ENCODE measurements at regions of chr7 and their contacts with region 1.

Region 1: DNA sequence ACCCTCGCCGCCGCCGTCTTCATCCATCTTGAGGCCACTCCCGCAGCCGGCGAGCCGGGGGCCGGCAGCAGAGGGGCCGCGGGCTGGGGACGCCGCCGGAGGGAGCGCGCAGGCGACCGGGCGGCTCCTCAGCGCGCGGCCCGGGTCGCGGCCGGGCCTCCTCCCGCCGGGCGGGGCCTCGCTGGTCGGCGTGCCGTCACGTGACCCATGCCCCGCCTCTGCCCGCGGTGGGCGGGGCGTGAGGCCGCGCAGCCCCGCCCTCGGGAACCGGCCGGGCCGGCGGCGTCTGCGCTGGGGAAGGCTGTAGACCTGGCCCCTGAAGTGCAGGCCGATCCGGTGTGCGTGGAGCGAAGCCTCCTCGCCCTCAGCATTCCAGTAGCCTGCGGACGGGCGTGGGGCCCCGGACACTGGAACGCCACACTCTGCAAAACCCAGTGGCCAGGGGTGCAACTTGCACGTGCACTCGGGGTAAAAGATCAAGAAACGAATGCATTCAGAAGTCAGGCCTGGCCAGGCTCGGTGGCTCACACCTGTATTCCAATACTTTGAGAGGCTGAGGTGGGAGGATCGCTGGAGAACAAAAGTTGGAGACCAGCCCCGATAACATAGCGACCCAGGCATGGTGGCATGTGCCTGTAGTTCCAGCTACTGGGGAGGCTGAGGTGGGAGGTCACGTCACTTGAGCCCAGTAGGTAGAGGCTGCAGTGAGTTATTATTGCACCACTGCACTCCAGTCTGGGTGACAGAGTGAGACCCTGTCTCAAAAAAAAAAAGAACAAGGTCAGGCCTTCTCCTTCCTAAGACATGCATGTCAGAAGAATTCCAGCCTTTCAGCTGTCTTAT is at the start of gene CYTH3:
- DNase-seq: peak; percentile 71
- H3K4me3 Mint-ChIP-seq: peak within 1 kb of the TSS; percentile 81
- H3K27ac Mint-ChIP-seq: no peak within 1 kb of the TSS
- H3K4me1 Mint-ChIP-seq: peaks cover 13% of the 10 kb centered on the region
- H3K27me3 Mint-ChIP-seq: peaks cover 21% of the 10 kb centered on the region
- total RNA-seq, gene CYTH3: 1.1 TPM

Region 2: DNA sequence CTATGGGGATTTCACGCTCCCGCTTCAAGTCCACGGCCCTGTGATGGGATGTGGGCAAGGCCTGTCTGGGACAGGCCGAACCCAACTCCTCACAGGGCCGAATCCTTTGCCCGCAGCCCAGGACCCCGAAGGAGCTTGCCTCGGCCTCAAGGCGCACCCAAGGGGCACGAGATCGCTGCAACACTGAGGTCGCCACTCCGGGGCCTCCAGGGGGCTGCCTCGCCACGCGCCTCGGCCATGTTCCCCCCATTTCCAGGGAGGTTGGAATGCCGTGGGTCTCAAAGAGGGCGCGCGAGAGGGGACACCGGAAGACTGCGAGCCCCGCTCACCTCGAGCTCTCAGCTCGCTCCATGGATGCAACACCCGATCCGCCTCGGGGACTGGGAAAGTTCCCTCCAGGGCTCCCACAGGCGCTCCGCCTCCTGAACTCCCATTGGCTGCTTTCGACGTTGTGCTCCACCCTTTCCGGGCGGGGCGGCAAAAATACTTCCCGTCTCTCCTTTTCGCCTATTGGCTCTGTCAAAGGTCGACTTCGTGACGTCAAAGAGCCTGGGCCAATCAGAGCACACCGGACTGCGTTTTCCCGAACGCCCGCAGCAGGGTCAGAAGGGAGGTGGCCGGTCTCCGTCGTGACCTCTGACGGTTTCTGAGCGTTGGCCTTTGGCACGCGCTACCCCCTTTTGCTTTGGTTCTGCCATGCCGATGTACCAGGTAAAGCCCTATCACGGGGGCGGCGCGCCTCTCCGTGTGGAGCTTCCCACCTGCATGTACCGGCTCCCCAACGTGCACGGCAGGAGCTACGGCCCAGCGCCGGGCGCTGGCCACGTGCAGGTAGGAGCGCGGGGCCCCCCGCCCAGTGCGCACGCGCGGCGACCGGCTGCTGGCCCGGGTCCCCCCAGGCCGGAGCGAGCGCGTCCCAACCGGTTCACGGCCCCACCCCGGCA is 263.8 kb before region 1 on chr7 and contains the starts of genes AIMP2 and PMS2:
- CTCF ChIA-PET with region 1: no interaction called
- intact Hi-C with region 1: loop called (anchors 2 kb)
- DNase-seq: peak; percentile 99
- H3K4me3 Mint-ChIP-seq: peak within 1 kb of the TSS; percentile 87
- H3K27ac Mint-ChIP-seq: peak within 1 kb of the TSS; percentile 89
- H3K4me1 Mint-ChIP-seq: peaks cover 45% of the 10 kb centered on the region
- H3K27me3 Mint-ChIP-seq: no peaks in the 10 kb centered on the region
- total RNA-seq, gene AIMP2: 30.8 to 32.2 TPM
- total RNA-seq, gene PMS2: 19.4 to 19.8 TPM

Region 3: GRCh38 chr7:6106140-6106904 is 166.4 kb before region 1 on chr7:
- CTCF ChIA-PET with region 1: no interaction called
- intact Hi-C with region 1: loop called (anchors 1 kb)
- DNase-seq: peak; percentile 58
- H3K4me3 Mint-ChIP-seq: peak overlapping the region; percentile 82
- H3K27ac Mint-ChIP-seq: peak overlapping the region; percentile 82
- H3K4me1 Mint-ChIP-seq: peaks cover 33% of the 10 kb centered on the region
- H3K27me3 Mint-ChIP-seq: no peaks in the 10 kb centered on the region

Region 4: DNA sequence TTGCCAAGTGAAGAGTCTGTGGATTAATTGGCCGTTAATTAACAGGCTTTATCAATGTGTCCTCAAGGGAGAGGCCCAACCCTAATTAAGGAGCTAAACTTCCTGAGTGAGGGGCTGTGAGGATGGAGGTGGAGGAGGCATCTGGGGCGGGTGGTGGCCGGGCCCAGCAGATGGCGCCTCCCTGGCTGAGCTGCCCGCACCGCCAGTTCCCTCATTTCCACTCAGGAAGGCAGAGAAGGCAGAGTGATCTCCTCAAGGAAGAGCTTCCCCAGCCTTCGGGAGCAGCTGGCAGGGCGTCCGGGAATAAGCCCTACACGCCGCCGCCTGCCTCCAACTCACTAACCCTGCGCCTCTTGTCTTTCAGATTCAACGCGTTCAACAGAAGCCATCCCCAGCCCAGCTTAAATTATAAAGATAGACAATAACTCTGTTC is 112.5 kb before region 1 on chr7:
- CTCF ChIA-PET with region 1: interaction called, 4 read pairs
- intact Hi-C with region 1: loop called (anchors 5 kb)
- DNase-seq: no peak
- H3K4me3 Mint-ChIP-seq: no peak overlapping the region
- H3K27ac Mint-ChIP-seq: no peak overlapping the region
- H3K4me1 Mint-ChIP-seq: no peaks in the 10 kb centered on the region
- H3K27me3 Mint-ChIP-seq: no peaks in the 10 kb centered on the region

Region 5: GRCh38 chr7:6221340-6222319 is 51.1 kb before region 1 on chr7:
- CTCF ChIA-PET with region 1: no interaction called
- intact Hi-C with region 1: loop called (anchors 2 kb)
- DNase-seq: peak; percentile 57
- H3K4me3 Mint-ChIP-seq: peak overlapping the region; percentile 3
- H3K27ac Mint-ChIP-seq: peak overlapping the region; percentile 55
- H3K4me1 Mint-ChIP-seq: peaks cover 17% of the 10 kb centered on the region
- H3K27me3 Mint-ChIP-seq: no peaks in the 10 kb centered on the region

Region 6: GRCh38 chr7:6256677-6257535 is 15.8 kb before region 1 on chr7:
- CTCF ChIA-PET with region 1: interaction called, 6 read pairs
- intact Hi-C with region 1: loop called (anchors 1 kb)
- DNase-seq: peak; percentile 62
- H3K4me3 Mint-ChIP-seq: no peak overlapping the region
- H3K27ac Mint-ChIP-seq: no peak overlapping the region
- H3K4me1 Mint-ChIP-seq: peaks cover 29% of the 10 kb centered on the region
- H3K27me3 Mint-ChIP-seq: peaks cover 9% of the 10 kb centered on the region

Region 7: DNA sequence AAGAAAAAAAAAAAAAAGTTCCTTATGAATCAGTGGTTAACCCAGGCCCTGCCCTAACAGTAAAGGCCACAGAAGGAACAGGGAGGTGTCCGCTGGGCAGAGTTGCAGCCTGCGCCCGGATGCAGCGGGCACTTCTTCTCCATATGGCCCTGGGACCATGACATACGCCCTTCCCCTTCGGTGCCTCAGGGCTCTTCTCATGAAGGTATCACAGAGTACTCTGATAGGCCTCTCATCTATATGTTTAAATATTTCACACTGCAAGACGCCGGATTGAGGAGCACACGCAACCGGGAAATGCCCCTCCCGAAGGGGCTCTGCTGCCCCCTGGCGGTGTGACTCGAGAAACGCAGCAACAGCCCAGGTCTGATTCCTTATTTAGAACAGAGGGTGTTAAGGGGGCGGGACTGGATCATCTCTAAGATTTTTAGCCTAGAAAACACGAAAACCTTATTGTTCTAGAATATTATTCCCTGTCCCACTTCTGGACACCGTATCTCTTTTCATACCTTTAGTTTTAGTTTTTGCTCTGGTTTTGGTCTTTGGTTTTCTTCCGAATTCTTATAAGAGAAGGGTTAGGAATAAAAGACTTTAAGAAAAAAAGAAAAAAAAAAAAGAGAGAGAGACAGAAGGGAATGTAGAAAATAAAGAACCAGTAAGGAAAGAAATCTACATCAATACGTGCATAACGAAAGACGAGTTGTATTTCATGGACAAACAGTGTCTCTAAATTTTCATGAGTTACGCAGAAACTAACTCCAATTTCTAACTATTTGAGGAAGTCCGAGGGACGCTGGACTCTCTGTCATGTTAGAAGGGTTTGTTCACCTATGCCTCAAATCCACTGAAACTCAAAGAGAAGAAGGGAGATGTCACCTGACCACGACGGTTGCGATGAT is 163.0 kb after region 1 on chr7:
- CTCF ChIA-PET with region 1: no interaction called
- intact Hi-C with region 1: loop called (anchors 5 kb)
- DNase-seq: peak; percentile 95
- H3K4me3 Mint-ChIP-seq: peak overlapping the region; percentile 58
- H3K27ac Mint-ChIP-seq: peak overlapping the region; percentile 78
- H3K4me1 Mint-ChIP-seq: peaks cover 43% of the 10 kb centered on the region
- H3K27me3 Mint-ChIP-seq: no peaks in the 10 kb centered on the region

Measured in activated naive CD4-positive, alpha-beta T cell treated with anti-CD3 and anti-CD28 coated beads for 36 hours (primary cell).